ENCODE measurements at regions of chr3 and their contacts with region 1.

Region 1: DNA sequence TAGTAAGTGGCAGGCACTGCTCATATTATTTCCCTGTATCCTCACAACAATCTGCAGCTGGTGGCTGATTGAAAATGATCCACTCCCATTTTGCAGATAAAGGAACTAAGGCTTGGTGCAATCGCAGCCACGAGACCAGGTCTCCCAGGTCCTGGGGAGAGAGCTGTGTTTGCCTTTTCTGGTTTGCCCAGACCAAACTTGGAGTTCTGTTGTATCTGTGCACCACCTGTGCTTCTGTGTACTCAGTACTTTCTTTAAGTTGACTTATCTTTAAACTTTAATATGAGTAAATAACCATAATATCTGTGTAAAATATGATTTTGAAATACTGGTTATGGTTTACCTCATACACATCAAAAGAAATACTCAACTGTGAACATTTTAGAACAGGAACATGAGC is 625.7 kb upstream of the CFAP20DC start:
- DNase-seq: no peak
- H3K4me3 ChIP-seq: no peak overlapping the region
- H3K27ac ChIP-seq: no peak overlapping the region
- H3K27me3 ChIP-seq: peaks cover 2% of the 10 kb centered on the region
- CTCF ChIP-seq: no peak

Region 2: DNA sequence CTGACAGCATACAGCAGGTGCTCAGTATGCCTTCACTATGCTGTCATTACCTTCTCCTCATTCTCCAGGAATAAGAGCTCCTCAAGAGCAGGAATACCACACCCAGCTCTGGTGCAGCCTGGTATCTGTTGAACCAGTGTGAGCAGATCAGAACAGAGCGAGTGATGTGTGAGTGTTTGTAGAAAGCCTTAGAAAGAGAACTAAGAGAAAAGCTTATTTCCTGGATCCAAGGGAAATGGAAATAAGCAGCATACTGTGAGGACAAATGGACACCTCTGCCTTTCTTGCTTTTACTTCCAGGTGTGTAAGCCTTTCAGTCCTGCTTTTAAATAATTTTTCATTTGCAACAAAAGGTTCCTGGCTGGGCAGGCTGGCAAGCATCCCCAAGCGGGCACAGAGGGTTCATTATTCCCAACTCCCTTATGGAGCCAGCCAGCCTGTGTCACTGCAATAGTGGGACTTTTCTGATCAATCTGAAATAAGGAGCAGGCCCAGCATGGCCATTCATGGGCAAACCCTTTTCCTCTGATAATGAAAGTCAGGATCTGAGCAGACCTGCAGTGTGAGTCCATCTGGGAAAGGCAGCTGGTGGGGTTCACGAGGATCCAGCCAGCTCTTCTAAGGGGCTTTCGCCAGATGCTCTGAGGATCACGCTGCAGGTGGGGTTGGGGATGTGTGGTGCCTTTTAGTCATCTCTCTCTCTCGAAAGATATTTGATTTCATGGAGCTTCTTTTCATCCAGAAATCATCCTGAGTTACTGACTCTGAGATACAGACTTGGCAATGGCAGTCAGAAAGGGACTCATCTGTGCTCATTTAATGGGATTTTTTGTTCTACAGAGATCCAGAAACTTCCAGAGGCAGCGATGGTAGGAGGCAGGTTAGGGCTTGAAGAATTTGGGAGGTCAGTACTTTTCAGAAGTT is 30.8 kb before region 1 on chr3:
- CTCF ChIA-PET with region 1: no interaction called
- POLR2A ChIA-PET with region 1: no interaction called
- DNase-seq: no peak
- H3K4me3 ChIP-seq: no peak overlapping the region
- H3K27ac ChIP-seq: no peak overlapping the region
- H3K27me3 ChIP-seq: peaks cover 15% of the 10 kb centered on the region
- CTCF ChIP-seq: no peak

Region 3: GRCh38 chr3:59660852-59661625 is 14.5 kb before region 1 on chr3:
- CTCF ChIA-PET with region 1: no interaction called
- POLR2A ChIA-PET with region 1: no interaction called
- DNase-seq: no peak
- H3K4me3 ChIP-seq: no peak overlapping the region
- H3K27ac ChIP-seq: no peak overlapping the region
- H3K27me3 ChIP-seq: no peaks in the 10 kb centered on the region
- CTCF ChIP-seq: no peak

Region 4: GRCh38 chr3:59920822-59921221 is 245.3 kb after region 1 on chr3:
- CTCF ChIA-PET with region 1: no interaction called
- POLR2A ChIA-PET with region 1: no interaction called
- DNase-seq: no peak
- H3K4me3 ChIP-seq: no peak overlapping the region
- H3K27ac ChIP-seq: no peak overlapping the region
- H3K27me3 ChIP-seq: no peaks in the 10 kb centered on the region
- CTCF ChIP-seq: no peak

Region 5: GRCh38 chr3:60598671-60599070 is 923.2 kb after region 1 on chr3:
- CTCF ChIA-PET with region 1: interaction called, 11 read pairs
- POLR2A ChIA-PET with region 1: no interaction called
- DNase-seq: no peak
- H3K4me3 ChIP-seq: no peak overlapping the region
- H3K27ac ChIP-seq: no peak overlapping the region
- H3K27me3 ChIP-seq: peaks cover 5% of the 10 kb centered on the region
- CTCF ChIP-seq: no peak

Measured in AG04450 (cell line).